ENCODE measurements at regions of chr2 and their contacts with region 1.

Region 1: DNA sequence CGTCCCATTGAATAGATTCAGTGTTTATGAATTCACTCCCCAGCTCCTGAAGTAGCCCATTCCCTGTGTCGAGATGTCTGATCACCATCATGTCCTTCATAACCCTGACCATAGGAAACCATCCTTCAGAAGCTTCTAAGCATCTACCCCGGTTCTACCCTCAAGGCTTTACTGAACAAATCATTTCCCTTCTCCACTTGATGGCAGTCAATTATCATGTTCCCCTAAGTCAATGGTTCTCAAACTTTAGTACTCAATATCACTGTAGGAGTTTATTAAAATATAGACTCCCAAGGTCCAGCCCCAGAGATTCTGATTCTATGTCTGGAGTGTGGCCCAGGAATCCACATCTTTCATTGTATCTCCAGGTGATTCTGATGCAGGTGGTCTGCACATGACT is 228.4 kb upstream of the SP5 start:
- DNase-seq: no peak
- H3K4me3 ChIP-seq: no peak overlapping the region
- H3K4me3 Mint-ChIP-seq: no peak overlapping the region
- H3K27ac Mint-ChIP-seq: no peak overlapping the region
- H3K4me1 ChIP-seq: peaks cover 17% of the 10 kb centered on the region
- H3K4me1 Mint-ChIP-seq: peaks cover 20% of the 10 kb centered on the region
- H3K27me3 ChIP-seq: no peaks in the 10 kb centered on the region
- H3K27me3 Mint-ChIP-seq: no peaks in the 10 kb centered on the region
- CTCF ChIP-seq: no peak

Region 2: DNA sequence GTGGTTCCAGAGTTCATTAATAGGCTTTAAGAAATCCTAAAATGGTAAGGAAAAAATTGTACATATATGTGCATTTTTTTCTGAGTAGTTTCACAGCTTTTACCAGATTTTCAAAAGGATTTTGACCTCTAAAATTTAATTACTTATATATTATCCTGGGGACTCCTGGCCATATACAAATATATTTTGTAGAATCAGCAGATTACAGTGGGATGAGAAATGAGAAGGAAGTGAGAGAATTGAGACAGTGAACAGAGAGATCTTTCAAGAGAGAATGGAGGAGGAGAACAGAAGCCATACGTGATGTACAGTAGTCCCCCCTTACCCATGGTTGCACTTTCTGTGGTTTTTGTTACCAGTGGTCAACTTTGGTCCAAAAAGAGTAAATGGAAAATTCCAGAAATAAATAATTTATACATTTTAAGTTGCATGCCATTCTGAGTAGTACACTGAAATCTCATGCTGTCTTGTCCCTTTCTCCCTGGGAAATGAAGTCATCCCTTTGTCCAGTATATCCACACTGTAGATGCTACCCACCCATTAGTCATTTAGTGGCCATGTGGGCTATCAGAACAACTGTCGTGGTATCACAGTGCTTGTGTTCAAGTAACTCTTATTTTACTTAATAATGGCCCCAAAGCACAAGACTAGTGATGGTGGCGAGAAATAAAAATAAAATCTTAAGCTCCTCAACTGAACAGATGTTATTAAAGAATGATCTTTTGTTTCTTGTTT is 439.2 kb before region 1 on chr2:
- CTCF ChIA-PET with region 1: no interaction called
- POLR2A ChIA-PET with region 1: interaction called, 10 read pairs
- intact Hi-C with region 1: no loop called
- DNase-seq: no peak
- H3K4me3 ChIP-seq: no peak overlapping the region
- H3K4me3 Mint-ChIP-seq: no peak overlapping the region
- H3K27ac Mint-ChIP-seq: no peak overlapping the region
- H3K4me1 ChIP-seq: no peaks in the 10 kb centered on the region
- H3K4me1 Mint-ChIP-seq: no peaks in the 10 kb centered on the region
- H3K27me3 ChIP-seq: no peaks in the 10 kb centered on the region
- H3K27me3 Mint-ChIP-seq: no peaks in the 10 kb centered on the region
- CTCF ChIP-seq: no peak

Region 3: DNA sequence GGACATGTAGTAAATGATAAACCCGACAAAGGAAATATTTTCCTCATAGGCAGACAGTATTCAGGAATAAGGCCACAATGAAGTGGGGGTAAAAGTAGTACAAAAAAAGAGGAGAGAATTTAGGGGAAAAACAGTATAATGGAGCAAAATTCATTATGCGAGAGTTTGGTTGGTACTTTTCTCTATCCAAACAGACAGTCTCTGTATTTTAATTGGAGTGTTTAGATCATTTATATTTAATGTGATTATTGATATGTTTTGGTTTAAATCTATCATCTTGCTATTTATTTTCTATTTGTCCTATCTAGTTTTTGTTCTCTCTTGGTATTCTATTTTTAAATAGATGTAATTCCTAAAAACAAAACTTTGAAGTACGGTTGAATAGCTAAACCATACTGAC is 58.1 kb after region 1 on chr2:
- CTCF ChIA-PET with region 1: no interaction called
- POLR2A ChIA-PET with region 1: no interaction called
- intact Hi-C with region 1: no loop called
- DNase-seq: no peak
- H3K4me3 ChIP-seq: no peak overlapping the region
- H3K4me3 Mint-ChIP-seq: no peak overlapping the region
- H3K27ac Mint-ChIP-seq: no peak overlapping the region
- H3K4me1 ChIP-seq: no peaks in the 10 kb centered on the region
- H3K4me1 Mint-ChIP-seq: no peaks in the 10 kb centered on the region
- H3K27me3 ChIP-seq: no peaks in the 10 kb centered on the region
- H3K27me3 Mint-ChIP-seq: no peaks in the 10 kb centered on the region
- CTCF ChIP-seq: no peak

Region 4: GRCh38 chr2:170647741-170648436 is 161.2 kb after region 1 on chr2:
- CTCF ChIA-PET with region 1: no interaction called
- POLR2A ChIA-PET with region 1: interaction called, 12 read pairs
- intact Hi-C with region 1: no loop called
- DNase-seq: no peak
- H3K4me3 ChIP-seq: no peak overlapping the region
- H3K4me3 Mint-ChIP-seq: no peak overlapping the region
- H3K27ac Mint-ChIP-seq: no peak overlapping the region
- H3K4me1 ChIP-seq: no peaks in the 10 kb centered on the region; the same call in 1 of the 2 replicates
- H3K4me1 Mint-ChIP-seq: no peaks in the 10 kb centered on the region
- H3K27me3 ChIP-seq: no peaks in the 10 kb centered on the region
- H3K27me3 Mint-ChIP-seq: no peaks in the 10 kb centered on the region
- CTCF ChIP-seq: no peak